Heart right ventricle (tissue), 16 donors: ENCODE measurements at regions of chr10 and their contacts with region 1.

Region 1: GRCh38 chr10:50624866-50625692 is 1.3 kb upstream of the SGMS1 start:
- DNase-seq: peak; percentile 54 to 61
- ATAC-seq: peak; percentile 68 to 86 (median 75)
- H3K4me3 ChIP-seq: peak overlapping the region; percentile 45 to 99 (median 89)
- H3K27ac ChIP-seq: peak overlapping the region; percentile 98 to 100 (median 99)
- H3K4me1 ChIP-seq: peaks cover 0 to 30% (median 29%) of the 10 kb centered on the region in 9 donors
- H3K27me3 ChIP-seq: no peaks in the 10 kb centered on the region
- CTCF ChIP-seq: peak; percentile 21 to 76 (median 63)

Region 2: DNA sequence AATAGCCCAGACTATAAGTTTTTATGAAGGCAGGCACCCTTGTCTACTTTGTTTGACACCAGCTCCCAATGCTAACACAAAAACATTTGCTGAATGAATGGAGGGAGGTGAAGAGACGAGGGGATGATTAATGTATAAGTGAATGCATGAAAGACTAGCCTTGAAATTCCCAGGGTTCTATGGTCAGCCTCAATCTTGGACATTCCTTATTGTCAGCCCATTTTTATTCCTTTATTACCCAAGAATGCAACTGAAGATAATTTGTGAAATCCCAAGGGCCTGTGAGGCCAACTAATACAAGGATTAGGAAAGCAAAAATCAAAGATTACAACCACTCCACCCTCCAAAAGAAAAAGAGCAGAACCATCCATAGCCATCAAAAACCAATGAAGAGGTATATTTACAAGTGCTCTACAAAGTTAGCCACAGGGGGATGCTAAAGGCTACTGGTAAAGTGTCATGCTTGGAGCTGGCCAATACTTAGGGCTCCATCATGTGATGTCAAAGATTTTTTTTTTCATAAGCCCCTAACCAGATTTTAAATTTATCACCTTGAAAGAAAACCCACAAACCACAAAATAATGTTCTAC is 333.7 kb before region 1 on chr10:
- intact Hi-C with region 1: loop called in 6 of 10 experiments (anchors 5 to 10 kb)
- DNase-seq: no peak
- ATAC-seq: peak in 2 of 8 donors; percentile 55
- H3K4me3 ChIP-seq: no peak overlapping the region
- H3K27ac ChIP-seq: no peak overlapping the region
- H3K4me1 ChIP-seq: peaks cover 0 to 11% (median 4%) of the 10 kb centered on the region in 9 donors
- H3K27me3 ChIP-seq: no peaks in the 10 kb centered on the region
- CTCF ChIP-seq: peak in 7 of 9 donors; percentile 40 to 65 (median 54)

Region 3: DNA sequence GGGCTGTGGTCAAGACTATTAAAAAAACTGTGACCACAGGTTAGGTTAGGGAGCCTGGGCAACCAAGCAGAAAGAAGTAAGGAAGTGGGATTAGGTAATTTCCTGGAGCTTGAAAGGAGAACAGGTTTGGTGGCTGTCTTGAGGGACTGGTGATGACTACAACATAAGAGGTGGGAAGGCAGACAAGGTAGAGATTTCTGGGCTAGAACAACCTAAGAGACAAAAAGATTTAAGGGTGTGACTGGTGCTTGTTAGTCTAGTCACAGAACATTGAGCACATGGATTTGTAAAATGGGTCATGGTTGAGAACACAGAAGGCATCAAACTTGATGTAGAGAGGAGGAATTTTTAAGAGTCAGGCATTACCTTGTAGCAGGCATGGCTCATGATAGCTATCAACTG is 250.0 kb before region 1 on chr10:
- intact Hi-C with region 1: loop called in 1 of 10 experiments (anchors 10 kb)
- DNase-seq: no peak
- ATAC-seq: no peak
- H3K4me3 ChIP-seq: no peak overlapping the region
- H3K27ac ChIP-seq: peak overlapping the region in 4 of 10 donors; percentile 62 to 77 (median 72)
- H3K4me1 ChIP-seq: peaks cover 0 to 45% (median 32%) of the 10 kb centered on the region in 9 donors
- H3K27me3 ChIP-seq: no peaks in the 10 kb centered on the region
- CTCF ChIP-seq: no peak

Region 4: GRCh38 chr10:50497757-50498156 is 127.3 kb before region 1 on chr10:
- intact Hi-C with region 1: no loop called
- DNase-seq: no peak
- ATAC-seq: peak; percentile 38 to 86 (median 73)
- H3K4me3 ChIP-seq: peak overlapping the region in 5 of 10 donors; percentile 7 to 27 (median 14)
- H3K27ac ChIP-seq: peak overlapping the region in 8 of 10 donors; percentile 17 to 84 (median 60)
- H3K4me1 ChIP-seq: peaks cover 0 to 44% (median 28%) of the 10 kb centered on the region in 9 donors
- H3K27me3 ChIP-seq: no peaks in the 10 kb centered on the region
- CTCF ChIP-seq: no peak

Region 5: DNA sequence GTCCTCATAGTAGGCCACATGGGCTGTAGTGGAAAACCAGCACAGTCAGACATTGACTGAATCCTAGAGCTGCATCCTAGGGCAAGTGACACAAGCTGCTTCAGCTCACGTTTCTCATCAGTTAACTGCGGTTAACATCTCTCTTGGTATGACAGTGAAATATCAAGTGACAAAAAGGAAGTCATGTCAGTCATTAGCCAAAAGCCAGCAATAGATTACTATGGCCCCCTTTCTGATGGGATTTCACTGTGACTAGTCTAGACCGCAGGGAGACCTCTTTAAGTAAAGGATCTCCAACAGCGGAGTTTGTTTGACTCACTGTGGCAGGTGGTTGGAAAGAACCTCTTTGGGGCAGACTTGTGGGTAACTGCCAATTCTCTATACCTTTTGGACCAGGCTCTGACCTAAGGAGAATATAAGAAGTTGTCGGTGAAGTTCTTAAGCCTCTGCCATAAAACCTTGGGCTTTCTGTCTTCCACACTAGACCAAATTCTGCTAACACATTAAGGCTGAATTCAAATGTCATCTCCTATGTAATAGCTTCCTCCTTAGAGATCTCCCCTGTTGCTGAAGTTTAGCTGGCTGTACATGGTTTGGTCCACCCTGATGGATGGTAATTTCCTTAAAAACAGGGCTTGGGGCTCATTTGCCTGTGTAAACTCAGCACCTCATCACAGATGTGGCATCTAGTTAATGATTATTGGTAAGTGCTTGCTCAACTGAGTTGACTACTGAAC is 116.6 kb before region 1 on chr10:
- intact Hi-C with region 1: loop called in 1 of 10 experiments (anchors 5 kb)
- DNase-seq: no peak
- ATAC-seq: no peak
- H3K4me3 ChIP-seq: no peak overlapping the region
- H3K27ac ChIP-seq: peak overlapping the region in 2 of 10 donors; percentile 7 to 45
- H3K4me1 ChIP-seq: peaks cover 0 to 54% (median 45%) of the 10 kb centered on the region in 9 donors
- H3K27me3 ChIP-seq: no peaks in the 10 kb centered on the region
- CTCF ChIP-seq: no peak

Region 6: GRCh38 chr10:50577681-50578350 is 47.3 kb before region 1 on chr10:
- intact Hi-C with region 1: loop called in 1 of 10 experiments (anchors 5 kb)
- DNase-seq: peak in 1 of 2 donors; percentile 54
- ATAC-seq: peak; percentile 80 to 94 (median 88)
- H3K4me3 ChIP-seq: peak overlapping the region in 2 of 10 donors; percentile 1 to 11
- H3K27ac ChIP-seq: peak overlapping the region; percentile 11 to 81 (median 66)
- H3K4me1 ChIP-seq: peaks cover 0 to 56% (median 42%) of the 10 kb centered on the region in 9 donors
- H3K27me3 ChIP-seq: no peaks in the 10 kb centered on the region
- CTCF ChIP-seq: no peak

Region 7: GRCh38 chr10:50648089-50648934 is 23.2 kb after region 1 on chr10:
- intact Hi-C with region 1: no loop called
- DNase-seq: no peak
- ATAC-seq: no peak
- H3K4me3 ChIP-seq: no peak overlapping the region
- H3K27ac ChIP-seq: no peak overlapping the region
- H3K4me1 ChIP-seq: peaks cover 0 to 9% (median 1%) of the 10 kb centered on the region in 9 donors
- H3K27me3 ChIP-seq: no peaks in the 10 kb centered on the region
- CTCF ChIP-seq: no peak

Region 8: DNA sequence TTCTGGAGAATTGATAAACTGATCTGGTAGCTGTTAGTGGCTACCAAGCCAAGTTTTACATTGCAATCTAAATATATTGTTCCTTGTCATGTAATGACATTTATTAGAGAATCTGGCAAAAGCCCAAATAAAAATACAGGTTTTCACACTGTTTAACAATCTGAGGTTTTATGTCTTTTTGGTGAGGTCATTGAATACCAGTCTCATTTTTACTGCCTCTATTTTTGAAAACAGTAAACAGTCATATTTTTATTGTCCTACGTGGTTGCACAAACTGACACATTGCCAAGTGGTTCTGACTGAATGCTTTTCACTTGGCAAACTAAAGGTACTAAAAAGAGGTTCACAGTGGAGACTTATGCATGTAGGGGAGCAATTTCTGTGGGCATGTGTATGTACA is 606.7 kb after region 1 on chr10:
- intact Hi-C with region 1: no loop called
- DNase-seq: no peak
- ATAC-seq: peak in 1 of 8 donors; percentile 35
- H3K4me3 ChIP-seq: no peak overlapping the region
- H3K27ac ChIP-seq: peak overlapping the region in 8 of 10 donors; percentile 2 to 68 (median 42)
- H3K4me1 ChIP-seq: peaks cover 0 to 64% (median 21%) of the 10 kb centered on the region in 9 donors
- H3K27me3 ChIP-seq: no peaks in the 10 kb centered on the region
- CTCF ChIP-seq: no peak